ENCODE measurements at regions of chr2 and their contacts with region 1.

Region 1: GRCh38 chr2:112726497-112727190 is 5.8 kb downstream of the NT5DC4 start:
- DNase-seq: peak in 1 of 2 donors; percentile 96
- H3K4me3 ChIP-seq: no peak overlapping the region
- H3K27ac ChIP-seq: no peak overlapping the region
- H3K4me1 ChIP-seq: no peaks in the 10 kb centered on the region
- H3K27me3 ChIP-seq: no peaks in the 10 kb centered on the region
- CTCF ChIP-seq: peak; percentile 86 to 93 (median 87)
- POLR2A ChIP-seq: no peak

Region 2: GRCh38 chr2:112601751-112602150 is 124.9 kb before region 1 on chr2:
- intact Hi-C with region 1: loop called (anchors 5 kb)
- DNase-seq: no peak
- H3K4me3 ChIP-seq: no peak overlapping the region
- H3K27ac ChIP-seq: no peak overlapping the region
- H3K4me1 ChIP-seq: peaks cover 9% of the 10 kb centered on the region
- H3K27me3 ChIP-seq: no peaks in the 10 kb centered on the region
- CTCF ChIP-seq: no peak
- POLR2A ChIP-seq: no peak

Region 3: DNA sequence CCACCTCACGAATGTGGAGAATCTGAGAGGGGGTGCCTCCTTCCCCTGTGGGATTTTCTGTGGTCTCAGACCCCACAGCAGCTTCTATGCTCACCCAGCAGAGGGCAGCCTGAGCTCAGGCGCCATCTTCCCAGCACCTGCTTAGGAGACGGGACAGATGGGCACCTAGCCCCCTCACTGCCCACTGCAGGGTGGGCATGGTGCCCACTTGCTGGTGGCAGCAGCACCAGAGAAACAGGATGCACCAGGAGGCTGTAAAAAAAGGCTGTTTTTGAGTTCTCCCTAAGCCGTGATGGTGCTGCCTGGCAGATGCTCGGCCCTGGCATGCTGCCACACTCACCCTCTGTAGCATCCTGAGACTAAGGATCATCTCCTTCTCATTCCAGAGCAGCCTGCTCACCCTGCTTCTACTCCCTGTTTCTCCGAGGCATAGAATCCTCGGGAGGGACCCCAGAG is 100.0 kb before region 1 on chr2:
- intact Hi-C with region 1: loop called (anchors 10 kb)
- DNase-seq: no peak
- H3K4me3 ChIP-seq: peak overlapping the region in 1 of 2 donors; percentile 27
- H3K27ac ChIP-seq: peak overlapping the region; percentile 46
- H3K4me1 ChIP-seq: peaks cover 20% of the 10 kb centered on the region
- H3K27me3 ChIP-seq: no peaks in the 10 kb centered on the region
- CTCF ChIP-seq: peak; percentile 25 to 93 (median 72)
- POLR2A ChIP-seq: no peak

Region 4: DNA sequence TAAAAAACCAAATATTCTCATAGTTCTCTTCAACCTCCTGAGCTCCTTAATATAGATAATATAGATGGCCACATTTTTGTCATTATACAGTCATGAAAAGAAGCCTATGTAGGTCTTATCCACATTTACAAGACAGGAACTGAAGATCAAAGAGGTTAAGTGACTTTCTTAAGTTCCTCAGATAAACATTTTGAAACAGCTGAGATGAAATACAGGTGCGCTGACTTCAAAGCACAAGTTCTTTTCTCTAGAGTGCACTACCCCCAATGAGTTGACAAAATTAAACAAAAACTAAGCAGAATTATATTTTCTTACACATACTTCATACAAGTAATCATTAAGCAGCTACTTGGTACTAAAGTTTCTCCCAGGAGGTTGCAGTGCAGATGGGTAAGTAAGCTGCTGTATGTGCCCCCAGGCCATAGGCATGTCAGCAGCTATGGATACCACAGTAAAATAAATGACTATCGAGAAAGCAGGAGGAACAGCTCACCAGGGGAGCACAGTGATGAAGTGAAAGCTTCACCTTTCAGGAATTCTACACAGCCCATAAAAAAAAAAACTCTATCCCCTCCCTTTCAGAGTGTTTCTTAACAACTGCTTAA is 1915.6 kb after region 1 on chr2:
- intact Hi-C with region 1: no loop called
- DNase-seq: no peak
- H3K4me3 ChIP-seq: no peak overlapping the region
- H3K27ac ChIP-seq: no peak overlapping the region
- H3K4me1 ChIP-seq: no peaks in the 10 kb centered on the region
- H3K27me3 ChIP-seq: no peaks in the 10 kb centered on the region
- CTCF ChIP-seq: no peak
- POLR2A ChIP-seq: no peak

Measured in vagina (tissue), 2 donors.